ENCODE measurements at regions of chr10 and their contacts with region 1.

Region 1: DNA sequence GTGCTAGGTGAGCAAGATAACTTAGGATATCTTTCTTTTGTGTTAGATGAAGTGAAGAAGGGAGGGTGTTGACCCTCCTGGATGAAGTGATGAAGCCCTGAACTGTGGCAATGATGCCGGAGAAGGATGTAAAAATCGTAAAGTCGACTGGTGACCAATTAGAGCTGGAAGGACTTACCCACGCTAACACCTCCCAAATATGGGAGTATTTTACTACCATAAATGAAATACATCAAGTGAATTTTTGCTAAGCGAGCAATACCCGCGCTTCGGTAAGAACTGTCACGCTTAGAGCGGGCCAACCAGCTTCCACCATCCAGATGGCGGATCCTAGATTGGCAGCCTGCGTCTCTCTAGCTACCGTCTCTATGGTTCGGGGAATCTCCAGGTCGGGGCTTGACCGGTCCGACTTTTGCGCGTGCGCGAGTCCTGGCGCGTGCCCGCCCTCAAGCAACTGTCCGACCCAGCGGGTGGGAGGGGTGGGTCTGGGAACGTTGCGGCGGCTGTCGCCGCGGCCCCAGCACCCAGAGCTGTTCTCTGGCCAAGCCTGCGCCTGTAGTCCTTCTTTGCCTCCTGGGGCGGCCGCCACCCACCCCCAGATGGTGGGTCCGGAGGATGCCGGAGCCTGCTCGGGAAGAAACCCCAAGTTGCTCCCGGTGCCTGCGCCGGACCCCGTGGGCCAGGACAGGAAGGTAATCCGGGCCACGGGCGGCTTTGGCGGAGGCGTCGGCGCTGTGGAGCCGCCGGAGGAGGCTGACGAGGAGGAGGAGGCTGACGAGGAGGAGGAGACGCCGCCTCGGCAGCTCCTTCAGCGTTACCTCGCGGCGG is at the start of gene TBC1D12:
- DNase-seq: peak; percentile 95
- H3K4me3 Mint-ChIP-seq: peak within 1 kb of the TSS; percentile 88
- H3K27ac Mint-ChIP-seq: peak within 1 kb of the TSS; percentile 73
- H3K4me1 Mint-ChIP-seq: peaks cover 6% of the 10 kb centered on the region
- H3K27me3 Mint-ChIP-seq: no peaks in the 10 kb centered on the region
- CTCF ChIP-seq: no peak
- total RNA-seq, gene TBC1D12: 5.4 and 5.9 TPM in 2 replicates

Region 2: GRCh38 chr10:94412449-94412848 is 10.2 kb after region 1 on chr10:
- CTCF ChIA-PET with region 1: no interaction called
- POLR2A ChIA-PET with region 1: interaction called, 43 read pairs
- intact Hi-C with region 1: no loop called
- DNase-seq: no peak
- H3K4me3 Mint-ChIP-seq: no peak overlapping the region
- H3K27ac Mint-ChIP-seq: no peak overlapping the region
- H3K4me1 Mint-ChIP-seq: peaks cover 13% of the 10 kb centered on the region
- H3K27me3 Mint-ChIP-seq: no peaks in the 10 kb centered on the region
- CTCF ChIP-seq: no peak